ENCODE measurements at regions of chr1 and their contacts with region 1.

Region 1: DNA sequence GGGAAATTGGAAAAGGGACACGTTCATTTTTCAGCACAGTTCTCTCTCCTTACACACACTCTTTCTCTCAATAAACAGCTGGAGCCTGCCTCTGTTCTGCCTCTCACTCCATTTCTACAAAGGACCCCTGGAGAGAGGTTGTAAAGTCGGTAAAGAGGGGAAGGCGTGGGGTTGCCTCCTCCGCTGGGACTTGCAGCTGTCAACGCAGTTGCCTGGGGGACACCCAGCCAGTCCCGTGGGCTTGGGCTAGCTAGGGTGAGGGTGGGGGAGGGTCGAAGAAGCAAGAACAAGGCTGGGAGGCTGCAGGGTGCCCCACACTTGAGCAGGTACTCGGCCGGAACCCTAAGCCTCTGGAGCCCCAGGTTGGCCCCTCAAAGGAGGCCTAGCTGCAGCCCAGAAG is 27.6 kb downstream of the C1orf216 start:
- H3K4me3 ChIP-seq: no peak overlapping the region
- H3K27ac ChIP-seq: no peak overlapping the region
- H3K4me1 ChIP-seq: no peaks in the 10 kb centered on the region
- CTCF ChIP-seq: no peak

Region 2: GRCh38 chr1:35737120-35737519 is 46.0 kb after region 1 on chr1:
- CTCF ChIA-PET with region 1: no interaction called
- POLR2A ChIA-PET with region 1: interaction called, 10 read pairs
- H3K4me3 ChIP-seq: no peak overlapping the region
- H3K27ac ChIP-seq: no peak overlapping the region
- H3K4me1 ChIP-seq: no peaks in the 10 kb centered on the region
- CTCF ChIP-seq: no peak

Region 3: DNA sequence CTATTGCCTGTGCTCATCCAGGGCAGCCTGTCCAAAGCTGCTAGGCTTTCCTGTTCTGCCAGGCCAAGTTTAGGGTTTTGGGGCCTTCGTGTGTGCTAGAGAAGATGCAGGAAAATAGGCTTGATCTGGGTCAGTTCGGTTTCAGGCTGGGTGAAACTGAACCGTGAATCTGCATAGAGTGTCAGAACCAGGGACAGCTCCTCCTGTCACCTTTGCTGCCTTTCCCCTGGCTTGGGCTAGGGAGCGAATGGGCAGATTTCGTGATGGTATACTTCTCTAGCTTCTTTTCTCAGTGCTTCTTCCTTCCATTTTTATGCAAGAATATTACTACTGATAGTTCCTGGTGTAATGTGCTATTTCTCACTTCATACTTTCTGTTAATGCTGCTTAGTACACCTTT is 185.9 kb after region 1 on chr1:
- CTCF ChIA-PET with region 1: no interaction called
- POLR2A ChIA-PET with region 1: no interaction called
- H3K4me3 ChIP-seq: no peak overlapping the region
- H3K27ac ChIP-seq: no peak overlapping the region
- H3K4me1 ChIP-seq: no peaks in the 10 kb centered on the region
- CTCF ChIP-seq: no peak